Endothelial cell of umbilical vein (primary cell): ENCODE measurements at regions of chr7 and their contacts with region 1.

Region 1: DNA sequence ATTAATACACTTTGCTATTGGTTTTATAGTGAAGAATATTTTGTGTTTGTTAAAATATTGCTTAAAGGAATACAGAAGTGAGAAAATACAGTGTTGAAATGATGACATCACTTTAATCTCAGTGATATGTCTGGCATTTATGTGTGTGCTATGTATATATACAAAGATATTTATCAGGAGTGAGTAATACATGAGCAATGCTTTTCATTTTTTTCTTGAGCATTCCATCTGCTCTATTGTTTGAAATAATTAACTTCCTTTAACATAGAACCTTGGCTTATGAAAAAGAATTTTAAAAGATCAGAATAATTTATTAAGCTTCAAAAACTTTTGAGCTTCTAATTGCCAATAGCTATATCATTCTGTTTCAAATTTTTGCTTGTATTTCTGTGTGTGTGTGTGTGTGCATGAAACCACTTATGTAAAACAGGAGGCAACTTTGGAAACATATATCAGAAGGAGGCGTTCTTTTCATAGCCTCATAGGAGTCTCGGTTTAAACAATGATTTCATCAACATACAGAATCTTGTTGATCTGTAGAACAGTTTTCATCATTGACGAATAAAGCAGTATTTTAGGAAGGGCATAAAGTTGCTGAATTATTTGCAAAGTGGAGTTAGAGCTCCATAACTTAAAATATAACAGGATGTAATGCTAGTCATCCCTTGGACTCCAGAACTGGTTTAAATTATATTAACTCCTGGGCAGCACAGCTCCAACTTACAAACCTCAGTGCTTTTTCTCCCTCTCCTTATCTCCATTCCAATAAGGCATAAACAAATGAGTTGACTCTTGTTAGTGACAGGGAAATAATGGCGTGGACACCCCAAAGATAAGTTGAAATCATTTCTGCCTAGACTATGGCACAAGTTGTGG is 228.4 kb upstream of the DGKB start:
- DNase-seq: peak; percentile 86
- H3K4me3 ChIP-seq: peak overlapping the region in 1 of 3 experiments; percentile 37
- H3K27ac ChIP-seq: peak overlapping the region; percentile 98
- H3K4me1 ChIP-seq: peaks cover 38% of the 10 kb centered on the region
- H3K27me3 ChIP-seq: no peaks in the 10 kb centered on the region
- CTCF ChIP-seq: no peak
- POLR2A ChIP-seq: no peak

Region 2: GRCh38 chr7:14748461-14748860 is 382.4 kb before region 1 on chr7:
- CTCF ChIA-PET with region 1: interaction called, 4 read pairs
- POLR2A ChIA-PET with region 1: no interaction called
- dilution Hi-C with region 1: no loop called
- intact Hi-C with region 1: loop called (anchors 1 kb)
- DNase-seq: peak; percentile 95
- H3K4me3 ChIP-seq: no peak overlapping the region
- H3K27ac ChIP-seq: peak overlapping the region; percentile 60
- H3K4me1 ChIP-seq: peaks cover 28% of the 10 kb centered on the region
- H3K27me3 ChIP-seq: no peaks in the 10 kb centered on the region
- CTCF ChIP-seq: no peak
- POLR2A ChIP-seq: peak; percentile 34

Region 3: GRCh38 chr7:15043931-15044330 is 87.0 kb before region 1 on chr7:
- CTCF ChIA-PET with region 1: no interaction called
- POLR2A ChIA-PET with region 1: no interaction called
- dilution Hi-C with region 1: no loop called
- intact Hi-C with region 1: loop called (anchors 2 kb)
- DNase-seq: no peak
- H3K4me3 ChIP-seq: no peak overlapping the region
- H3K27ac ChIP-seq: no peak overlapping the region
- H3K4me1 ChIP-seq: peaks cover 24% of the 10 kb centered on the region
- H3K27me3 ChIP-seq: no peaks in the 10 kb centered on the region
- CTCF ChIP-seq: no peak
- POLR2A ChIP-seq: no peak

Region 4: GRCh38 chr7:15086131-15086611 is 44.7 kb before region 1 on chr7:
- CTCF ChIA-PET with region 1: no interaction called
- POLR2A ChIA-PET with region 1: no interaction called
- dilution Hi-C with region 1: no loop called
- intact Hi-C with region 1: loop called (anchors 2 kb)
- DNase-seq: no peak
- H3K4me3 ChIP-seq: no peak overlapping the region
- H3K27ac ChIP-seq: no peak overlapping the region
- H3K4me1 ChIP-seq: peaks cover 7% of the 10 kb centered on the region
- H3K27me3 ChIP-seq: no peaks in the 10 kb centered on the region
- CTCF ChIP-seq: no peak
- POLR2A ChIP-seq: no peak

Region 5: DNA sequence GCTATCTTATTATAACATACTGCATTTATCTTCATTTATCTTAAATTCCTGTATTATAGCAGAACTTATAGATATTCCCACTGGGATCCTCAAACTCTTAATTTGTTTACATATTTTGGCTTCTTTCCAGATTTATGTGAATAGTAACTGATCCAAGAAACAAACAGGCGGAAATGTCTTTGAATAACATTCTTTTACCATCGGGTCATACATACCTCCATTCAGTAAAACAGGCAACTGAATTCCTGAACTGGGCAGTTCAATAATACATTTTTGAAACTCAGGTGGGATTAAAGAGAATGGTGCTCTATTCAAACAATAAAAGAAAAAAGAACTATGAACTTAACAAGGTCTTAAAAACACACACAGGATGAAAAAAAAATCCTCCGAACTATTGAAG is 953.0 kb after region 1 on chr7:
- CTCF ChIA-PET with region 1: no interaction called
- POLR2A ChIA-PET with region 1: no interaction called
- dilution Hi-C with region 1: no loop called
- intact Hi-C with region 1: loop called (anchors 5 kb)
- DNase-seq: peak; percentile 85
- H3K4me3 ChIP-seq: no peak overlapping the region
- H3K27ac ChIP-seq: peak overlapping the region; percentile 84
- H3K4me1 ChIP-seq: peaks cover 42% of the 10 kb centered on the region
- H3K27me3 ChIP-seq: no peaks in the 10 kb centered on the region
- CTCF ChIP-seq: no peak
- POLR2A ChIP-seq: no peak